Activated B cell treated with CpG ODN at 0.5 μM for 24 hours (primary cell): ENCODE measurements at regions of chr5 and their contacts with region 1.

Region 1: GRCh38 chr5:73540192-73540591 is 25.2 kb downstream of the ANKRA2 start:
- DNase-seq: no peak
- ATAC-seq: no peak
- H3K4me3 Mint-ChIP-seq: no peak overlapping the region
- H3K27ac Mint-ChIP-seq: no peak overlapping the region
- H3K4me1 Mint-ChIP-seq: no peaks in the 10 kb centered on the region
- H3K27me3 Mint-ChIP-seq: peaks cover 14% of the 10 kb centered on the region
- CTCF ChIP-seq: no peak

Region 2: DNA sequence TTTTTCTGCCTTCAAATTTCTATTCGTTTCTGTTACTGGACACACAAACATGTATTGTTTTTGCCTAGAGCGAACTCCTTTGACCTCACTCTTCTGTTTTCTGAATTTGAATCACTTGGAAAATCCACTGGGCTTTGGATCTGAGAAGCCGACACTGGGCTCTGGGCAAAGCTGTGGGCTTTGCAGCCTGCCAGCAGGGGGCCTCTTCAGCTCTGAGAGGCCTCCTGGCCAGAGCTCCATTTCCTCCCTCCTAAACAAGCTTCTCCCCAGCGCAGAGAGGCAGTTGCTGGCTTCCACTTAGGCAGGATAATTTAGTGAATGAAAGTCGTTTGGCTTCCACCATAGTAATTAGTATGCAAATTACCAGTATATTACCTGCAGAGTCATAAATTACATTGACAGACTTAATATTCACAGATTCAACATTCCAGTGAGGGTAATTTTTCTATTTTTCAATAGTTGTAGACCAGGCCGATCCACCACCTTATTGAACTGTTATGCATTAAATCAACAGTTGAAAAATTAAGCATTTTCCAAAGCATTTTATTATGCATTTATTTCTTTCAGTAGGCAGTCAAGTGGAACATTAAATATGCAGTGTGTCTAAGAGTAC is 929.0 kb before region 1 on chr5:
- CTCF ChIA-PET with region 1: no interaction called
- POLR2A ChIA-PET with region 1: no interaction called
- intact Hi-C with region 1: loop called (anchors 5 kb)
- DNase-seq: no peak
- ATAC-seq: peak; percentile 69
- H3K4me3 Mint-ChIP-seq: no peak overlapping the region
- H3K27ac Mint-ChIP-seq: no peak overlapping the region
- H3K4me1 Mint-ChIP-seq: peaks cover 4% of the 10 kb centered on the region
- H3K27me3 Mint-ChIP-seq: peaks cover 12% of the 10 kb centered on the region
- CTCF ChIP-seq: no peak

Region 3: GRCh38 chr5:72920690-72921502 is 619.3 kb before region 1 on chr5:
- CTCF ChIA-PET with region 1: no interaction called
- POLR2A ChIA-PET with region 1: no interaction called
- intact Hi-C with region 1: loop called (anchors 2 kb)
- DNase-seq: no peak
- ATAC-seq: no peak
- H3K4me3 Mint-ChIP-seq: no peak overlapping the region
- H3K27ac Mint-ChIP-seq: no peak overlapping the region
- H3K4me1 Mint-ChIP-seq: no peaks in the 10 kb centered on the region
- H3K27me3 Mint-ChIP-seq: no peaks in the 10 kb centered on the region
- CTCF ChIP-seq: no peak

Region 4: DNA sequence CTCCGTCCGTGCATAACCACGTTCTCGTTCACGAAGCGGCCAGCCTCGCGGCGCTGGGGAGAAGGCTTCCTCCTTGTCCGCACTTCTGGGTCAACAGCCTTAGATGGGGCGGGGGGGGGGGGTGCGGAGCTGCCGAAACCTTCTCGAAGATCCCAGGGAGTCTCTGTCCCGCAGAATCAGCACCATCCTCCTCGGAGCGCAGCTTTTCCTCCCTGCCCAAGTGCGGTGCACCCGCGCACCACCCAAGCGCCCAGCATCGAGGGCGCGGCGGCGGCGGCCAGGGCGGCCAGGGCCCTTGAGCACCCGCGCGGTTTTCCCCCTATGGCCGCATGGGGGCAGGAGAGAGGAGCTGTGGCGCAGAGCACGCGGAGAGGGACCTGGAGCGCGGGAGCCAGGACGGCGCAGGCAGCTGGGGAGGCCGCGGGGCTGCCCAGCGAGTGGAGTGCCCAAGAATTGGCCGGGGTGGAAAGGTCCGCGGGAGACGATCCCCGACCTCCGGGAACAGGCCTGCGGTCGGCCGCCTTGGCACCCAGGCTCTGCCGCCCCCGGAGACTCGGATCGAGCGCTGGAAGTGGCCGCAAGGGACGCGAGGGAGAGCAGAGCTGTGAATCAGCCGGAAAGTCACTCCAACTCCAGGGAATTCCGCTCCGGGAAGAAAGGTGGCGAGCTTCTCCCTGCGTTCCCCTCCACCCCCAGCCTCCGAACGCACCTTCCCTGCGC is 324.1 kb before region 1 on chr5:
- CTCF ChIA-PET with region 1: no interaction called
- POLR2A ChIA-PET with region 1: no interaction called
- intact Hi-C with region 1: loop called (anchors 2 kb)
- DNase-seq: no peak
- ATAC-seq: peak; percentile 47
- H3K4me3 Mint-ChIP-seq: peak overlapping the region; percentile 61
- H3K27ac Mint-ChIP-seq: no peak overlapping the region
- H3K4me1 Mint-ChIP-seq: peaks cover 9% of the 10 kb centered on the region
- H3K27me3 Mint-ChIP-seq: peaks cover 66% of the 10 kb centered on the region
- CTCF ChIP-seq: no peak